Activated T-helper 2 cell treated with anti-CD3 and anti-CD28 coated beads, Interferon-gamma antibody, Interleukin-2, Interleukin-4, amounts not matched to agents 10 μg/mL and 5 μg/mL and 100 μg/mL, durations not matched to agents 14 hours and 24 hours and 36 hours (primary cell): ENCODE measurements at regions of chr3 and their contacts with region 1.

Region 1: DNA sequence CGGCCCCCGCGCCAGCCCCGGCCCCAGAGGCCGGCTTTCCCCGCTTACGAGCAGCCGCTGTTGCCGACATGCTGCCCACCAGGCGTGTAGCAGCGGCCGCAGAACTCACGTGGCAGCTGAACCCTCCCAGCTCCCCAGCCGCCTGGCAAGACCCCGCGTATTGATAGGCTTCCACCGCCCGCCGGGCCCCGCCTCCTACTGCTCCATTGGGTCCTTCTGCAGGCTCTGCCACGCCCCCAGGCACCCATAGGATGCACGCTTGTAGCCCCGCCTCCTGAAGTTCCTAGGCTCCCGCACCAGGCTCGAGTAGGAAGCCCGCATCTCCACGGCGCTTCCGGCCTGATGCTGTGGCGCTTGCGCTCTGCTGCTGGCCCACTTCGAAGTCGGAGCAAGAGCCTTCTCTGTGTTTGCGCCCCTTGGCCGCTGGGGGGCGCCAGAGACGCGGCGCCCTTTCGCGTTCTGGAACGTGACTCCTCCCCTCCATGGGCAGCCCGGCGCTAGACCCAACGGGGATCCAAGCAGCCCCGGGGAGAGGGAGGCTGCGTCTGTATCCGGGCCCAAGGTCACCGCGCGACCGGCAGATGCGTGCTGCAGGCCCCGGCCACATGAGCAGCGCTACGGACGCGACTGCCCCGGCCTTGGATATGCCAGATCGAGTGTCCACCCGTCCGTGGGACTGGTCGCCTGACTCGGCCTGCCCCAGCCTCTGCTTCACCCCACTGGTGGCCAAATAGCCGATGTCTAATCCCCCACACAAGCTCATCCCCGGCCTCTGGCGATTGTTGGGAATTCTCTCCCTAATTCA is at the starts of genes PARP3 and RRP9:
- DNase-seq: peak; percentile 100
- H3K4me3 Mint-ChIP-seq: peak within 1 kb of the TSS; percentile 76
- H3K27ac Mint-ChIP-seq: peak within 1 kb of the TSS; percentile 86
- H3K4me1 Mint-ChIP-seq: peaks cover 22% of the 10 kb centered on the region
- H3K27me3 Mint-ChIP-seq: no peaks in the 10 kb centered on the region
- total RNA-seq, gene PARP3: 15.8 and 18.9 TPM in 2 replicates
- total RNA-seq, gene RRP9: 57.5 and 58.2 TPM in 2 replicates

Region 2: GRCh38 chr3:51670823-51671733 is 270.9 kb before region 1 on chr3 and contains the start of gene TEX264:
- intact Hi-C with region 1: loop called (anchors 2 kb)
- DNase-seq: peak; percentile 93
- H3K4me3 Mint-ChIP-seq: peak within 1 kb of the TSS; percentile 86
- H3K27ac Mint-ChIP-seq: peak within 1 kb of the TSS; percentile 79
- H3K4me1 Mint-ChIP-seq: peaks cover 60% of the 10 kb centered on the region
- H3K27me3 Mint-ChIP-seq: no peaks in the 10 kb centered on the region
- total RNA-seq, gene TEX264: 43.1 TPM in 2 replicates

Region 3: GRCh38 chr3:51908026-51908425 is 34.0 kb before region 1 on chr3:
- intact Hi-C with region 1: no loop called
- DNase-seq: no peak
- H3K4me3 Mint-ChIP-seq: no peak overlapping the region
- H3K27ac Mint-ChIP-seq: no peak overlapping the region
- H3K4me1 Mint-ChIP-seq: no peaks in the 10 kb centered on the region
- H3K27me3 Mint-ChIP-seq: no peaks in the 10 kb centered on the region

Region 4: DNA sequence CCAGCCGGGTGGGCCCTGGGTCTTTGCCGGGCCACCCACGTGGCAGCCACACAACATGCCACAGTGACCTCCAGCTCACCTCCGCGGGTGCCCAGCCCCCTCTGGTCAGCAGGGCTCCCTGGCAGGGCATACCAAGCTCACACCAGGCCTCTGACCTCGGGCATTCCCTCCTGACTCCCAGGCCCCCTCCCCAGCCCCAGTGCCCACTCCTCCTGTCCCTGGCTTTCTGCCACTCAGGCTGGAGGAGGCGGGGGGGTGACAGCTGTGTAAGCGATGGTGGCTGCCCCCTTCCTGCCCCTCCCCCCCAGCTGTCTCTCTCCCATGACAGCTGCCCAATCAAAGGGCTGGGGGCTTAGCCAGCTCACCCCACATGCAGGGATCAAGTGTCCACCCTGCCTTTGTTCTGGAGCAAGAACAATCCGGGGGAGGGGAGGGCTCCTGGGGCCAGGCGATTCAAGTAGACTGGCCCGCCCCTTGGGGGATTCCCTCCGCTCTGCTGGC is 22.0 kb after region 1 on chr3:
- intact Hi-C with region 1: no loop called
- DNase-seq: no peak
- H3K4me3 Mint-ChIP-seq: no peak overlapping the region
- H3K27ac Mint-ChIP-seq: no peak overlapping the region
- H3K4me1 Mint-ChIP-seq: peaks cover 3% of the 10 kb centered on the region
- H3K27me3 Mint-ChIP-seq: peaks cover 2% of the 10 kb centered on the region

Region 5: GRCh38 chr3:51974963-51975851 is 33.2 kb after region 1 on chr3 and contains the start of gene ABHD14A:
- intact Hi-C with region 1: loop called (anchors 1 kb)
- DNase-seq: peak; percentile 70
- H3K4me3 Mint-ChIP-seq: peak within 1 kb of the TSS; percentile 90
- H3K27ac Mint-ChIP-seq: peak within 1 kb of the TSS; percentile 93
- H3K4me1 Mint-ChIP-seq: peaks cover 24% of the 10 kb centered on the region
- H3K27me3 Mint-ChIP-seq: no peaks in the 10 kb centered on the region
- total RNA-seq, gene ABHD14A: 13.5 and 15.9 TPM in 2 replicates

Region 6: DNA sequence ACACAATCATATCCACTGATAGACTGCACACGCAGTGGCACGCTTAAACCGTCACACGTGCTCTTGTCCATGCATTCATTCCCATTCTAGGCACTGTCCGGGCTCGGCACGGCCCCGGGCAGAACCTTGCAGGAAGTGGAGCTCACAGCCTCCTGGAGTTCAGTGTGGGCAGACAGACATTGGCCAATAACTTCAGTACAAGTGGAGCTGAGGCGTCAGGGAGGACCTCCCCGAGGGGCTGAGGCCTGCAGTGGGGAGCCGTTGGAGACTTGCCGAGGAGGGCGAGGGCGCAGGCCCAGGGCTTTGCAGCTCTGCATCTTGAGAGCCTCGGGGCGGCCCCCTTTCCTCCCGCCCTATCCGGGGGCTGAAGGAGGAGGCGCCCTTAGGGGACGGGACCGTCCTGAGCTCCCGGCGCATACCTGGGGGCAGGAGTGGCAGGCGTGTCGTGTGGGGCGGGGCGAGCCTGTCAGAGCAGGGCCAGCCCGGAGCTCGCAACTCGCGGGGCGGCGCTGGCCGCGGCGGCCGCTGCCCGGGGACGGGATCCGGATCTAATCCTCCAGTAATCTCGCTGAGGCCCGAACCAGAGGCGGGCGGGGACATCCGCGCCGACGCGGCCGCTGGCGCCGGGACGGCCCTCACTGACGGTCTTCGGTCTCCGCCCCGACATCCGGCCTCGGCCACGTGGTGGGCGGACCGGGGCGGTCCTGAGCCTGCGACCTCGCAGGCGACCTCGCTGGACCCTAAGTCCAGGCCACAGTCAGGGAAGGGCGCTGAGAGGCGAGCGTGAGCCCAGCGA is 41.0 kb after region 1 on chr3 and contains the start of gene ACY1:
- intact Hi-C with region 1: loop called (anchors 1 kb)
- DNase-seq: peak; percentile 73
- H3K4me3 Mint-ChIP-seq: peak within 1 kb of the TSS; percentile 94
- H3K27ac Mint-ChIP-seq: peak within 1 kb of the TSS; percentile 94
- H3K4me1 Mint-ChIP-seq: peaks cover 14% of the 10 kb centered on the region
- H3K27me3 Mint-ChIP-seq: no peaks in the 10 kb centered on the region
- total RNA-seq, gene ACY1: 62.8 and 64.6 TPM in 2 replicates

Region 7: GRCh38 chr3:51995346-51996163 is 53.6 kb after region 1 on chr3 and contains the start of gene RPL29:
- intact Hi-C with region 1: loop called (anchors 2 kb)
- DNase-seq: peak; percentile 90
- H3K4me3 Mint-ChIP-seq: peak within 1 kb of the TSS; percentile 100
- H3K27ac Mint-ChIP-seq: peak within 1 kb of the TSS; percentile 100
- H3K4me1 Mint-ChIP-seq: peaks cover 25% of the 10 kb centered on the region
- H3K27me3 Mint-ChIP-seq: peaks cover 16% of the 10 kb centered on the region
- total RNA-seq, gene RPL29: 1,666 and 1,693 TPM in 2 replicates

Region 8: DNA sequence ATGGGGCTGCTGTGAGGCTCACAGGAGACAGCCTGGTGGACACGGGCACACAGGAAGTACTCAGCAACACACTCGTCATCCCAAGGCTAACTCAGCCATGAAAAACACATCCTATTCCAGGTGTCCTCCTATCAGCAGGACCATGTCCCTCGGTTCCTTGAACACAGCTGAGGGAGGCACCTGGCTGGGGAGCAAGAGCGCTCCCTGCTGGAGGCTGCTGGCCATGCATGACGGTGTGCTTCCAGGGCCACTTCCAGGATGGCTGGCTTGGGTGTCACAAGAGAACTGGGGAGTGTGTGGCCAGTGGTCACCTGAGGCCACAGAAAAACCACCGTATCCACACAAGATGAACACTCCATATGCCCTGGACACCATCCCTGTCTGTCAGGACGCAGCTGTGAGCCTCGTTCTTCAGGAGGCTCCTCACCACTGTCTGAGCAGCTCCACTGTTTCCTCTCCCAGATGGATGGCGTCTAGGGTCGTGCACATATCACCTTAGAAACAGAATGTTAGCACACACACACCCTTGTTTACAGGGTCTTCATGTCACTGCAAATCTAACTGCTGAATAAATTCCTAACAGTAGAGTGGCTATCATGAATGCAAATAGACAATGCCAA is 181.2 kb after region 1 on chr3:
- intact Hi-C with region 1: loop called (anchors 1 kb)
- DNase-seq: peak; percentile 64
- H3K4me3 Mint-ChIP-seq: no peak overlapping the region
- H3K27ac Mint-ChIP-seq: no peak overlapping the region
- H3K4me1 Mint-ChIP-seq: peaks cover 7% of the 10 kb centered on the region
- H3K27me3 Mint-ChIP-seq: no peaks in the 10 kb centered on the region

Region 9: GRCh38 chr3:52154117-52155094 is 212.4 kb after region 1 on chr3 and contains the start of gene POC1A:
- intact Hi-C with region 1: loop called (anchors 5 kb)
- DNase-seq: peak; percentile 88
- H3K4me3 Mint-ChIP-seq: peak within 1 kb of the TSS; percentile 90
- H3K27ac Mint-ChIP-seq: peak within 1 kb of the TSS; percentile 92
- H3K4me1 Mint-ChIP-seq: peaks cover 16% of the 10 kb centered on the region
- H3K27me3 Mint-ChIP-seq: peaks cover under 1% of the 10 kb centered on the region
- total RNA-seq, gene POC1A: 20.4 and 22.2 TPM in 2 replicates